ENCODE measurements at regions of chr9 and their contacts with region 1.

Region 1: DNA sequence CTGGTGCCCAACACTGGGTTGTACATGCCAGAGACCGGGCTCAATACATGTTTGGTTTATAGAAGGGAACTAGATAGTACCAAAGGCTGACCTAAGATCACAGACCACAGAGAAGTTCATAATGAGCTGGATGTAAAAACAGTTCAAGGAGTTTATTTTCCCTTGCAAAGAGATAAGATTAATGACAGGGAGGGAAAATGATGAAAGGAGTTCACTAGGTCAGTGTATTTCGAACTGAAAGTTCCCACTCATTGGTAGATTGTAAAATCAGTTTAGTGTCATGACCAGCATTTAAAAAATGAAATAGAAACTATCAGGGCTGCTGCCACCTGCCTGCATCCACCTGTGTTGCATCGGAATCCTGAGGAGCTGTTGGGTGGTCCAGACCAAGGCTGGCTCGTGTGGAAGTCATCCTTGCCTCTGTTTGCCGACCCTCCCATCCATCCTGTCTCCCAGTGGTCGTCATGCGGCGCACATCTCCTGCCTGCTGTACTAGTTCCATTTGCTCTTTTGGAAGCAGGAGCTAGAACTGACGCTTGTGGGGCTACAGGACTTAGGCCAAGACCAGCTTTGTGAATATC is 21.1 kb downstream of the TBC1D2 start:
- DNase-seq: no peak
- ATAC-seq: no peak
- H3K4me3 ChIP-seq: no peak overlapping the region
- H3K27ac ChIP-seq: no peak overlapping the region
- H3K4me1 ChIP-seq: peaks cover 20% of the 10 kb centered on the region
- H3K27me3 ChIP-seq: no peaks in the 10 kb centered on the region
- CTCF ChIP-seq: no peak
- POLR2A ChIP-seq: no peak
- RAD21 ChIP-seq: no peak

Region 2: DNA sequence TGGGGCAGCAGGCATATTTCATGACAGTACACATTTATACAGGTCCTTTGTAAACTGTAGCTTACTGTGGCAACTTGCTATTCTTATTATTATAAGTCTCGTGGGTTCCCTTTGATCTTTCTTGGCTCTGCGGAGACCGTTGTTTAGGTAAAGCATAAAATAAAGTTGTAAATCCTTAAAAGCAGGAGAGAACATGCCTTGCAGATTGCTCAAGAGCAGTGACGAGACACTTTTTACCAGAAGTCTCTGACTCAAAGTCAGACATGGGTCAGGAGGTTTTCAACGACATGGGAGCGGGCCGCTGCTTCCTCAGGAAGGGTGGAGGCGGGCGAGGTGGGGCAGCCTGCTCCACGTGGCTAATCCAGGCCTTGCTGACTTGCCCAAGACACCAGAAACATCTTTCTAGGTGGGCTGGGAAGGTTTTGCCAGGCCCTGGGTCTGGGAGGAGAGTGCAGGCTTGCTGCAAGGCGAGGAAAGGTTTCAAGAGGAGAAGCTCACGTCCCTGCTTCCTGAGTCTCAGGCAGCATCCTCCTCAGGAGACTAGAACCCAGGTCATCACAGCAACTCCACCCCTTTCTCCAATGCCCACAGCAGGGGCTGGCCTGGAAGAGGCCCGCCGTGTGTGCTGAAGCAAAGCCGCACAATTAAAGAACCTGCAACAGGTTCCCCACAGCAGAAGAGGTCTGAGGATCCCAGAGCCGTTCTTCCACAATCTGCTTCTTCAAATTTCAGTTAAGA is 14.6 kb after region 1 on chr9:
- CTCF ChIA-PET with region 1: interaction called, 3 read pairs
- POLR2A ChIA-PET with region 1: no interaction called
- dilution Hi-C with region 1: no loop called
- in situ Hi-C with region 1: no loop called
- intact Hi-C with region 1: loop called (anchors 2 kb)
- DNase-seq: peak; percentile 97
- ATAC-seq: peak; percentile 73
- H3K4me3 ChIP-seq: no peak overlapping the region
- H3K27ac ChIP-seq: peak overlapping the region; percentile 97
- H3K4me1 ChIP-seq: peaks cover 46% of the 10 kb centered on the region
- H3K27me3 ChIP-seq: no peaks in the 10 kb centered on the region
- CTCF ChIP-seq: no peak
- POLR2A ChIP-seq: peak; percentile 21; the same call in 1 of the 2 replicates
- RAD21 ChIP-seq: no peak

Region 3: DNA sequence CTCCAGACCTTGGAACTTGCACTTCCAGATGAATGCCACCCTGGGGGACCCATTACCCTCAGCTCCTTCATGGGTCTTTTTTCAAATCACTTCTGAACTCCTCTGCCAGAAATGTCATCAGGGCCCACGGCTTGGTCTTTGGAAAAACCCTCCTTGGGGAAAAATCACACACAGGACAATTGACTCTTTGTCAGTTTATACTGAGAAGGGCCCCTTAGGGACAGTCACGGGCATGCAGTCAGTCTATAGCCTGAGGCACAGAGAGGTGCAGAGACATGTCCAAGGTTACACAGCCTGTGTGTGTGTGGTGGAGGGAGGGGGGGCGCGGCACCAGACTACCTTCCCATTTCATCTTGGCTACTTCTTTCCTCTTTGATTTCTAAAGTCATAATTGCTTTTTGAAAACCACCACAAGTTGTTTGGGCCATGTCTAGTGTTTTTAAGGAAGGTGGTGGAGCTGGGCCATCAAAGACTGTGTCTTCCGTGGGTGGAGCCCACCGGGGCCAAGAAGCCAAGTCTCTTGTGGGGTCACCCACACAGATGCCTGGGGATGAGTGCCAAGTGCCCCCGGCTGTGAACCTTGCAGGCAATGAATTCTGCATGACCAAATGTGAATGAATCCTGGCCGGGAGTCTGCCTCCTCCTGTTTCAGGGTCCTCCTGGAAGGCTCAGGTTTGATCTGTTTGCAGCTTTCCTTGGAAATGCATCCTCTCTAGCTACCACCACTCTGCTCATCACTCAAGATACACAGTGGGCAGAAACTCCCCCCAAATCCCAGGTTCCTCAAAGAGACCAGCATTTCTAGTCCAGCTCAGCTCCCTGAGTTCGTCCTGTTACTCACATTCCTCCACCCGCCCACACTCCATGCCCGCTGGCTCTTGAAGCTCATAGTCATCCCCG is 221.2 kb after region 1 on chr9:
- CTCF ChIA-PET with region 1: no interaction called
- POLR2A ChIA-PET with region 1: no interaction called
- dilution Hi-C with region 1: no loop called
- in situ Hi-C with region 1: no loop called
- intact Hi-C with region 1: no loop called
- DNase-seq: peak; percentile 74
- ATAC-seq: peak; percentile 85
- H3K4me3 ChIP-seq: no peak overlapping the region
- H3K27ac ChIP-seq: no peak overlapping the region
- H3K4me1 ChIP-seq: peaks cover 5% of the 10 kb centered on the region
- H3K27me3 ChIP-seq: no peaks in the 10 kb centered on the region
- CTCF ChIP-seq: no peak
- POLR2A ChIP-seq: no peak
- RAD21 ChIP-seq: no peak

Measured in IMR-90 (cell line).